ENCODE measurements at regions of chr15 and their contacts with region 1.

Region 1: GRCh38 chr15:41557673-41558399 is 1.2 kb upstream of the TYRO3 start:
- DNase-seq: peak; percentile 84 to 86
- H3K4me3 ChIP-seq: peak overlapping the region; percentile 46 to 96 (median 74); a peak in 7 of 8 replicates
- H3K27ac ChIP-seq: no peak overlapping the region
- H3K4me1 ChIP-seq: peaks cover 10 to 38% (median 31%) of the 10 kb centered on the region in 4 experiments
- H3K27me3 ChIP-seq: no peaks in the 10 kb centered on the region; a peak in 2 of 7 replicates
- CTCF ChIP-seq: peak; percentile 83 to 92 (median 84)
- EP300 ChIP-seq: peak in 1 of 2 experiments; percentile 43; a peak in 1 of 3 replicates
- POLR2A ChIP-seq: no peak
- RAD21 ChIP-seq: peak; percentile 86 to 93

Region 2: DNA sequence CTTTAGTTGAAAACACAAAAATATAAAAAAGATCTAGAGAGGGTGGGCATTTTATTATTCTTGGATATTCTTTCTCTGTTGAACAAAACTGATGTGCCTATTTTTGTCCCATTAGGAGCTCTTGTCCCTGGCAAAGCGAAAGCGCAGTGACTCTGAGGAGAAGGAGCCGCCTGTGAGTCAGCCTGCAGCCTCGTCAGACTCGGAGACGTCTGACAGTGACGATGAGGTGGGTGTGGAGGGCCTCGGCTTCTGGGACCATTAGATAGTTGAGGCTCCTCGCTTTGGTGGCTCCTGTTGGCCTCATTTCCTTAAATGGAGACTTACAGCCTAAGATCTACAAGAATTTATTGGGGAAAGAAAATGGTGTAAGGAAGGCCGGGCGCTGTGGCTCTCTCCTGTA is 119.6 kb before region 1 on chr15:
- CTCF ChIA-PET with region 1: no interaction called
- POLR2A ChIA-PET with region 1: no interaction called
- DNase-seq: no peak
- H3K4me3 ChIP-seq: no peak overlapping the region
- H3K27ac ChIP-seq: no peak overlapping the region
- H3K4me1 ChIP-seq: no peaks in the 10 kb centered on the region
- H3K27me3 ChIP-seq: no peaks in the 10 kb centered on the region
- CTCF ChIP-seq: no peak
- EP300 ChIP-seq: no peak
- POLR2A ChIP-seq: no peak
- RAD21 ChIP-seq: no peak

Region 3: GRCh38 chr15:41570764-41571163 is 12.9 kb after region 1 on chr15:
- CTCF ChIA-PET with region 1: interaction called, 80 read pairs
- POLR2A ChIA-PET with region 1: interaction called, 643 read pairs
- DNase-seq: no peak
- H3K4me3 ChIP-seq: no peak overlapping the region
- H3K27ac ChIP-seq: peak overlapping the region; percentile 29; the same call in 1 of the 2 replicates
- H3K4me1 ChIP-seq: peaks cover 5 to 24% (median 20%) of the 10 kb centered on the region in 4 experiments
- H3K27me3 ChIP-seq: no peaks in the 10 kb centered on the region
- CTCF ChIP-seq: no peak
- EP300 ChIP-seq: no peak
- POLR2A ChIP-seq: no peak
- RAD21 ChIP-seq: no peak

Region 4: GRCh38 chr15:41577863-41578735 is 20.3 kb after region 1 on chr15:
- CTCF ChIA-PET with region 1: interaction called, 80 read pairs
- POLR2A ChIA-PET with region 1: interaction called, 643 read pairs
- DNase-seq: no peak
- H3K4me3 ChIP-seq: no peak overlapping the region
- H3K27ac ChIP-seq: no peak overlapping the region; the same call in 1 of the 2 replicates
- H3K4me1 ChIP-seq: peaks cover 0 to 8% (median 0%) of the 10 kb centered on the region in 4 experiments; a peak in 2 of 7 replicates
- H3K27me3 ChIP-seq: no peaks in the 10 kb centered on the region
- CTCF ChIP-seq: no peak
- EP300 ChIP-seq: no peak
- POLR2A ChIP-seq: no peak
- RAD21 ChIP-seq: no peak